Dorsolateral prefrontal cortex (tissue), 120 donors: ENCODE measurements at regions of chr14 and their contacts with region 1.

Region 1: GRCh38 chr14:25049568-25050268 is at the start of gene STXBP6:
- DNase-seq: peak; percentile 25 to 90 (median 82)
- H3K4me3 ChIP-seq: peak within 1 kb of the TSS; percentile 59 to 90 (median 80)
- H3K27ac ChIP-seq: peak within 1 kb of the TSS; percentile 59 to 96 (median 93)
- H3K27me3 ChIP-seq: no peaks in the 10 kb centered on the region
- CTCF ChIP-seq: peak in 27 of 56 donors; percentile 5 to 52 (median 25)
- total RNA-seq, gene STXBP6: 22.3 to 73.1 (median 46.8) TPM

Region 2: DNA sequence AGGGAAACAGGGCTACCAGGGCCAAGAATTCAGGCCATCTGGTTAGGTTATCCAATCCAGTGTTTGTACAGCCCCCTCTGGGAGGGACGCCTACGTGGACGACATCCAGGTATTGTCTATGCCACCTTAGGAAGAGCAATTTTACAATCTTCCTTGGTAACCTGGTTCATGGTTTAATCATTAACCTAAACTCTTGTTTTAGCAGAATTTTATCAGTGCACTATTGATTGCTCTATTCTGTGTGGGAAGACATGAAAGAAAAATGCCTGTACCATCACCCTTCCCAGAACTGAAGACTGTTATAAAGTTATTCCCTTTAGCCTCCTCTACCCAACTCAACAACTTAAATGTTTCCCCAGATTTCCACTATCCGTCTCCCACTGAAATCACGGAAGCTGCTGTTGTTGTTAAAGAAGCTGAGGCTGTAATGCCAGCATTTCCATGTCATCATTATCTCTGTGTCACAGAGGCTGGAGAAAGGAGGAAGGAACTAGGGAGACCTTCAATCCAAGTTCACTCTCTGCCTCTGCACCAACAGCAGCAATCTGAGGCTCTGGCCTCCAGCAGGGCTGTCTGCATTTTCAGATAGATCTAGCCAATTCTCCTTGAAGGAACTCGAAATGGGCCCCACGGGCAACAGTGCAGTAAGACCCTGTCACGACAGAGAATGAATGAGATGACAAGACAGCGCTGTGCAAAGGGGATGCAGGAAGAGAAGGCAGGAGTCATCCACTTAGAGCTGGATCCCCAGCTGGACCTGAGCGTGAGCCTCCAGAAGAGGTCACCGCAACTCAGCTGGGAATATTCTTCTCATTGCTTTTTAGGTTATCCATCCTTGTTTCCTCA is 232.3 kb before region 1 on chr14:
- intact Hi-C with region 1: loop called (anchors 5 kb)
- DNase-seq: peak in 1 of 10 donors; percentile 45
- H3K4me3 ChIP-seq: no peak overlapping the region
- H3K27ac ChIP-seq: peak overlapping the region in 35 of 59 donors; percentile 1 to 67 (median 38)
- H3K27me3 ChIP-seq: no peaks in the 10 kb centered on the region
- CTCF ChIP-seq: peak in 53 of 56 donors; percentile 6 to 71 (median 45)

Region 3: GRCh38 chr14:24875991-24876878 is 173.5 kb before region 1 on chr14:
- intact Hi-C with region 1: loop called (anchors 5 to 10 kb)
- DNase-seq: no peak
- H3K4me3 ChIP-seq: peak overlapping the region in 28 of 59 donors; percentile 1 to 46 (median 18)
- H3K27ac ChIP-seq: peak overlapping the region in 58 of 59 donors; percentile 40 to 97 (median 87)
- H3K27me3 ChIP-seq: no peaks in the 10 kb centered on the region
- CTCF ChIP-seq: no peak

Region 4: DNA sequence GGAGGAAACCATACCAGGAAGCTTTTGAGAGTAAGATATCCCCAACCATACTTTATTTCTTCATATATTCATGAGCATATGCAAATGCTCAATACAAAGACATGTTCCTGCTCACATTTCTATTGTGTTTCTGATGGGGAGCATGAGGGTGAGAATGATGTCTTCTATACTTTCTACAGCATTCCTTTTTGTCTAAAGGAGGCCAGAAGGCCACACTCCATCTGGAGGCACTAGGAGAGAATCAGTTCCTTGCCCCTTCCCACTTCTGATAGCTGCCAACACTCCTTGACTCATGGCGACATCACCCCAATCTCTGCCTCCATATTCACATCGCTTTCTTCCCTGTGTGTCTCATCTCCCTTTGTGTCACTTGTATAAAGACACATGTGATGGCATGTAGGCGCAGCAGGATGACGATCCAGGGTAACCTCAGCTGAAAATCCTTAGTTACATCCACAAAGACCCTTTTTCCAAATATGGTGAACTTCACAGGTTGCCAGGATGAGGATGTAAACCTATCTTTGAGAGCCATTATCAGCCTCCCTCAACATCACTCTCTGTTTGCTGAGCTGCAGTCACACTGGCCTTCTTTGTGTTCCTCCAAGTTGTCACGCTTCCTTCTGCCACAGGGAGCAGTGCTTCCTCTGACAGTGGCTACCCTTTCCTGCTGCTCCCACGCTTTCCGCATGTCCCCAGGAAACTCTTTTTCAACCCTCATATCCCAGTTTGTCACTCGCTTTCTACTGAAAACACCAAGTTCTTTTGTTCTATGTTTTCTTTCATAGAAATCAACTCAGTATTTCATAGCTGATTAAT is 96.7 kb before region 1 on chr14:
- intact Hi-C with region 1: loop called in 1 of 2 experiments (anchors 5 kb)
- DNase-seq: peak in 6 of 10 donors; percentile 36 to 66 (median 54)
- H3K4me3 ChIP-seq: no peak overlapping the region
- H3K27ac ChIP-seq: peak overlapping the region in 42 of 59 donors; percentile 4 to 73 (median 46)
- H3K27me3 ChIP-seq: no peaks in the 10 kb centered on the region
- CTCF ChIP-seq: peak in 52 of 56 donors; percentile 10 to 68 (median 44)

Region 5: GRCh38 chr14:25132732-25133422 is 83.2 kb after region 1 on chr14:
- intact Hi-C with region 1: loop called (anchors 5 kb)
- DNase-seq: peak; percentile 13 to 79 (median 68)
- H3K4me3 ChIP-seq: peak overlapping the region in 45 of 59 donors; percentile 7 to 62 (median 36)
- H3K27ac ChIP-seq: peak overlapping the region in 3 of 59 donors; percentile 20 to 38 (median 32)
- H3K27me3 ChIP-seq: peaks cover 0 to 9% (median 0%) of the 10 kb centered on the region in 45 donors
- CTCF ChIP-seq: peak; percentile 76 to 96 (median 90)

Region 6: DNA sequence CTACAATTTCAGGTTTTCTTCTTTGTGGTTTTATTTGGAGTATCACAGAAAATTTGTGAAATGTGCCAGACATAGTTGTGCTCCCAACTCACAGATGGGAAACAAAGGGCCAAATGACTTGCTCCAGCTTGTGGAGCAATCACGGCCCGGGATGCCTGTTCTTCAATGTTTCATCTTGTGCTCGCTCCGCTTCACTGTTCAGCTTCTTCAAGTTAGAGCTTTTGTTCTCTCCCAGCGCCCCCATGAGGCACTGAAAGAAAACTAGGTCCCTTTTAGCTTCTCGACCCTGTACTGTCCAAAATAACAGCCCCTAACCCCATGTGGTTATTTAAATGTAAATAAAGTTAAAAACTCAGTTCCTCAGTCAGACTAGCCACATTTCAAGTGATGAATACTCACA is 188.1 kb after region 1 on chr14:
- intact Hi-C with region 1: loop called in 1 of 2 experiments (anchors 5 kb)
- DNase-seq: peak in 1 of 10 donors; percentile 40
- H3K4me3 ChIP-seq: no peak overlapping the region
- H3K27ac ChIP-seq: no peak overlapping the region
- H3K27me3 ChIP-seq: peaks cover 0 to 5% (median 0%) of the 10 kb centered on the region in 45 donors
- CTCF ChIP-seq: peak in 40 of 56 donors; percentile 13 to 61 (median 36)